CD4-positive, alpha-beta T cell (primary cell): ENCODE measurements at regions of chr11 and their contacts with region 1.

Region 1: GRCh38 chr11:101944923-101945322 is 28.6 kb upstream of the ANGPTL5 start:
- DNase-seq: no peak
- ATAC-seq: no peak
- H3K4me3 ChIP-seq: no peak overlapping the region
- H3K4me3 Mint-ChIP-seq: no peak overlapping the region
- H3K27ac ChIP-seq: no peak overlapping the region
- H3K27ac Mint-ChIP-seq: no peak overlapping the region
- H3K4me1 ChIP-seq: no peaks in the 10 kb centered on the region
- H3K4me1 Mint-ChIP-seq: no peaks in the 10 kb centered on the region
- H3K27me3 ChIP-seq: no peaks in the 10 kb centered on the region
- H3K27me3 Mint-ChIP-seq: no peaks in the 10 kb centered on the region
- CTCF ChIP-seq: no peak

Region 2: DNA sequence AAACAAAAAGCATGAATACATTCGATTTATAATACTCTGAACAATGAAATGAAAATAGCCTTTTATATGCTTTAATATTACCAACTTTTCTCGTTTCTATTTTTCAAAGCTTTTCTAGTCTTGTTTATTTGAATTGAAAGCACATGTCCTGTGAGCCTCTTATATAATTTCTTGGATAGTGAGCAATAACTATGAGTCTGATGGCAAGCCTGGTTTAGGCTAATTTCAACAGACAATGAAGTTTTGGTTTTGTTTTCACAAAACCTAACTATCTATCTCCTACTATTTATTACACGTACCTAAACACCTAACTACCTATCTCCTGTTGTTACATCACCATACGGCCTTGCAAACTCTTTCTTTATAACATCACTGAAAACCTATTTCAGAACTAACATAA is 59.3 kb before region 1 on chr11:
- CTCF ChIA-PET with region 1: no interaction called
- POLR2A ChIA-PET with region 1: no interaction called
- intact Hi-C with region 1: loop called in 1 of 2 experiments (anchors 5 kb)
- DNase-seq: no peak
- ATAC-seq: no peak
- H3K4me3 ChIP-seq: no peak overlapping the region
- H3K4me3 Mint-ChIP-seq: no peak overlapping the region
- H3K27ac ChIP-seq: no peak overlapping the region
- H3K27ac Mint-ChIP-seq: no peak overlapping the region
- H3K4me1 ChIP-seq: no peaks in the 10 kb centered on the region
- H3K4me1 Mint-ChIP-seq: peaks cover 7% of the 10 kb centered on the region
- H3K27me3 ChIP-seq: peaks cover 0 to 4% of the 10 kb centered on the region in 2 experiments
- H3K27me3 Mint-ChIP-seq: peaks cover 63% of the 10 kb centered on the region
- CTCF ChIP-seq: no peak